ENCODE measurements at regions of chr3 and their contacts with region 1.

Region 1: DNA sequence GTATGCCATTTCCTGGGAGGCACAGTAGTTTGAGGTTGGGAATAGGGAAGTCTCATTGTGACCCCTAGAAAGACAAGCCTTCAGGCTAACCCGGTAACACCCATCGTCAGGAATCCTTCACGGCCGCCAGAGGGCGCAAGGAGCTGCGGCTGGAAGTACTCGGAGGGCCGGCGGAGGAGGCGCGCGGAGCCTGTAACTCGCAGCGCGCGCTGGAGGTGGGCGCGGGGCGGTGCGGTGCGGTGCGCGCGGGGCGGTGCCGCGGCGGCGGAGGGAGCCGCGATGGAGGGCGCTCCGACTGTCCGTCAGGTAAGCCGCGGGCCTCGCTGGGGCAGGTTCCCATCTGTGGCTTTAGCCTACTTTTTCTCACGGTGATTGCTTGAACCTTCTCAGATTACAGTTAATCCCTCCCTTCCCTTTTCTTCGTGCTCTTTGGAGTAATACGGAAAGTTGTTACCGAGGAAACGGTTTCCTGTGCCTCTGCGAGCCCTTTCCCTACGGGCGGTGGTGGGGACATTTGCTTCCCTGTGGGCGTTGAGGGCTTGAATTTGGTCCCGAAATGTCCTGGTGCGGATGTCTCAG is at the start of gene GRAMD1C:
- DNase-seq: no peak
- H3K4me3 ChIP-seq: peak within 1 kb of the TSS; percentile 72
- CTCF ChIP-seq: peak; percentile 92

Region 2: GRCh38 chr3:113736548-113737089 is 102.1 kb before region 1 on chr3:
- CTCF ChIA-PET with region 1: interaction called, 76 read pairs
- POLR2A ChIA-PET with region 1: no interaction called
- DNase-seq: no peak
- H3K4me3 ChIP-seq: no peak overlapping the region
- CTCF ChIP-seq: peak; percentile 23

Region 3: DNA sequence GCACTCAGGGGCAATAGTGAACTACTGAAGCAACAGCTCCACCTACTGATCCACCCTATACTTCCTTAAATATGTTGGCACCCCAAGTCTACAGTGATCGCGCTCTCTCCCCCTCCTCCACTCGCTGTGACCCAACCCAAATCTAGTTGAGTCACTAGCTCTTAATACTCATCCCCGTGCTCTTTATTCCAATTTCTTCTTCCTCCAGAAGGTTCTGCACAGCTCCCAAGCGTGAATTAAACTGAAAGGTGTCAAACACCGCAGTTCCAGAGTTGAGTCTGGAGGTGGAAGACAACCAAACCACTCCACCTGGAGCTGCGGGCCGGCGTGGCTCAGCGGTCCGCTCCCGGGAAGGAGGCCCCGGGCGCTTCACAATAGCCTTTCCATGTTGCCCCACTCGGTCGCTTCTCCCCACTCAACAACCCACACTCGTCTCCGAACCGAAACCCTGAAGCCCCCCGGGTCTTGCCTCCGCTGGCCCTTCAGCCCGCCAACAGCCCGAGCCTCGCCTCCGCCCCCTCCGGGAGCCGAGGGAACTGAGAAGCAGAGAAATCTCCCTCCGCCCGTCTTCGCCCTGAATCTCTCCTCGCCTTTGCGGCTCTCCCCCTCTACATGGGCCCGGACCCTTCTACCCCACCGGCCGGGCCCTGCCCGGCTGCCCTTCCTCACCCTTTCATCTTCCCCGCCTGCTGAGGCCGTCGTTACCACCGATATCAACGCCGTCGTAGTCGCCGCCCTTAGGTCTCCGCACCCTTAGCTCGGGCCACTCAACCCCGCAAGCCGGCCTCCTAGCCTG is 93.2 kb before region 1 on chr3:
- CTCF ChIA-PET with region 1: interaction called, 15 read pairs
- POLR2A ChIA-PET with region 1: no interaction called
- DNase-seq: peak; percentile 68
- H3K4me3 ChIP-seq: peak overlapping the region; percentile 90
- CTCF ChIP-seq: peak; percentile 73

Region 4: GRCh38 chr3:113751141-113751540 is 87.6 kb before region 1 on chr3:
- CTCF ChIA-PET with region 1: interaction called, 15 read pairs
- POLR2A ChIA-PET with region 1: no interaction called
- DNase-seq: no peak
- H3K4me3 ChIP-seq: no peak overlapping the region
- CTCF ChIP-seq: no peak

Region 5: GRCh38 chr3:113825090-113825489 is 13.6 kb before region 1 on chr3:
- CTCF ChIA-PET with region 1: interaction called, 14 read pairs
- POLR2A ChIA-PET with region 1: no interaction called
- DNase-seq: no peak
- H3K4me3 ChIP-seq: no peak overlapping the region
- CTCF ChIP-seq: peak; percentile 16

Region 6: GRCh38 chr3:113912552-113913236 is 74.0 kb after region 1 on chr3:
- CTCF ChIA-PET with region 1: interaction called, 25 read pairs
- POLR2A ChIA-PET with region 1: interaction called, 3 read pairs
- DNase-seq: no peak
- H3K4me3 ChIP-seq: no peak overlapping the region
- CTCF ChIP-seq: peak; percentile 51

Region 7: DNA sequence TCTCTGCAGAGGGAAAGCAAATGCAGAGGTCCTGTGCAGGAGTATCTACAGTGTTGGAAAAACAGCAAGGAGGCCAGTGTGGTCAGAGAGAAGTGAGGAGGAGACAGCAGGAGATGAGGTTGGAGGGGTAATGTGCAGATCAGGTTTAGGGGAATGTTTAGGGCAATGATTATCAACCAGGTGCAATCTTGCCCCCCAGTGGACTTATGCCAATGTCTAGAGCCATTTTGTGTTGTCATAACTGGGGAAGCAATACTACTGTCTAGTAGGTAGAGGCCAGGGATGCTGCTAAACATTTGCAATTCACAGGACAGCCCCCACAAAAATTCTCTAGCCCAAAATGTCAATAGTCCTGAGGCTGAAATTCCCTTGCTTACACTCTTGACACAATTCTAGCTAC is 204.5 kb after region 1 on chr3:
- CTCF ChIA-PET with region 1: no interaction called
- POLR2A ChIA-PET with region 1: no interaction called
- DNase-seq: no peak
- H3K4me3 ChIP-seq: no peak overlapping the region
- CTCF ChIP-seq: no peak

Region 8: DNA sequence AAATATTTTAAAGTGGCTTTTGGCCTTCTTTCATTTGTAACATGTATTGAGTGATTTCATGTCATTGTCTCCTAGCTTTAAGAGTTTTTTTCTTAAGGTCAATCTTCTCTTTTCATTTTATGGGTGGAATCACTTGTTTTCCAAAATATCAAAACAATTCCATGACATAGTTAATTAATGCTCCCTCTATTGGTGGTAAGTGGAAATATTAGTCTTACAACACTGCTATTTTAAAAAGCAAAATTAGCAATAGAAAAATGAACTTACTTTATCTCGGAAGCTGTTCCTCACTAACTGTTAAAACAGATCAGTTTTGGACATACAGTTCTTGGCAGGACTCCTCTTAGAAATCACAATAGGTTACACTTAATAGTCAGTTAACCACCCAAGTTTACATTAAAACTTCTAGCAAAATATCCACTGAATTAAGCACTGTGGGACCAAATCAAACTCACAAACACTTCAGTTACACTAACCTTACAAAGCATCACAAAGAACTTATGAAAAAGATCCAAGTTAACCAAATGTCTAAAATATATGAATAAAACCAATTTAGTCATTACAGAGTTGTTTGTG is 497.5 kb after region 1 on chr3:
- CTCF ChIA-PET with region 1: interaction called, 10 read pairs
- POLR2A ChIA-PET with region 1: no interaction called
- DNase-seq: no peak
- H3K4me3 ChIP-seq: no peak overlapping the region
- CTCF ChIP-seq: peak; percentile 20

Measured in AG04449 (cell line).